ENCODE measurements at regions of chr3 and their contacts with region 1.

Region 1: DNA sequence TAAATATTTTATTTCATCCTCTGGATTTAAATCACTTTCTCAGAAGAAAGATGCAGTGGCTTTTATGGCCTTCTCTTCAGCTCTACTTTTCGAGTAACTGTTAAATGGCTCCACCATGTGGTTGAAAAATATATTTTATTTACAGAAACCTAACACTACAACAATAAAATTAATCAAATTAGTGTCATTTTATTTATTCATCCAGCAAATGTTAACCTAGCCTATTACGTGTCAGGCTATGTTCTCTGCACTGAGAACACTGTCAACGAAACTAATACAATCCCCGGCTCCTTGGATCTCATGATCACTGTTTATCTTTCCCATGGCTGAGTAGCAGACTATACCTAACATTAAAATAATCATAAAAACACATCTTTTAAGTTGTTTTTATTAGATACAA is 148.0 kb upstream of the OSTN start:
- DNase-seq: no peak
- H3K4me3 Mint-ChIP-seq: no peak overlapping the region
- H3K27ac Mint-ChIP-seq: no peak overlapping the region
- H3K4me1 Mint-ChIP-seq: no peaks in the 10 kb centered on the region
- H3K27me3 Mint-ChIP-seq: no peaks in the 10 kb centered on the region

Region 2: DNA sequence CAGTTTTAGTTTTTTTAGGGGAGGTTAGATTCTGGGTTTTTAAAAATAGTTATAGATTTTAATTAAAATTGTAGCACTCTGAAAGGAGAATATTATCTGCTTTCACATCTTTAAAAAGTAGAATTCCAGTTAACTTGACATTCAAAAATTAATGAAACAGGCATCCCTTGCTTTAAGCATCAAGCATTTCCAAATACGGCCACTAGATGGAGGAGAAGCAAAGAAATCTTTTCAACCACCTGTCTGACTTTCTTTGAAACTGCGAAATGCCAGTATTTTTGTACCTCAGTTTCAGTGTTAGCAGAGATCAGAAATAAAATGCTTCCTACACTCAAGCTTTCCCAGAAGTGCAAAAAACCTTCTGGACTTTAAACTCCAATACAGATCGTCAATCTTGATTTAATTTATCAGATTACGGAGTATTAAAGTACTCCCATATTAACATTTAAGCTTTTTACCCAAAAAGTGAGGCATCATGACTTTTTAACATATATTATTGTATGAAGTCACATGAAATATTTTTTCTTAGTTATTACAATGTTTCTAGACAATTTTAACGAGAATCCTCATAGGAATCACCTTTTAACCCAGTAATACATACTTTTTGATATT is 1083.7 kb before region 1 on chr3:
- intact Hi-C with region 1: loop called (anchors 2 kb)
- DNase-seq: no peak
- H3K4me3 Mint-ChIP-seq: no peak overlapping the region
- H3K27ac Mint-ChIP-seq: no peak overlapping the region
- H3K4me1 Mint-ChIP-seq: peaks cover 8% of the 10 kb centered on the region
- H3K27me3 Mint-ChIP-seq: peaks cover 7% of the 10 kb centered on the region

Region 3: DNA sequence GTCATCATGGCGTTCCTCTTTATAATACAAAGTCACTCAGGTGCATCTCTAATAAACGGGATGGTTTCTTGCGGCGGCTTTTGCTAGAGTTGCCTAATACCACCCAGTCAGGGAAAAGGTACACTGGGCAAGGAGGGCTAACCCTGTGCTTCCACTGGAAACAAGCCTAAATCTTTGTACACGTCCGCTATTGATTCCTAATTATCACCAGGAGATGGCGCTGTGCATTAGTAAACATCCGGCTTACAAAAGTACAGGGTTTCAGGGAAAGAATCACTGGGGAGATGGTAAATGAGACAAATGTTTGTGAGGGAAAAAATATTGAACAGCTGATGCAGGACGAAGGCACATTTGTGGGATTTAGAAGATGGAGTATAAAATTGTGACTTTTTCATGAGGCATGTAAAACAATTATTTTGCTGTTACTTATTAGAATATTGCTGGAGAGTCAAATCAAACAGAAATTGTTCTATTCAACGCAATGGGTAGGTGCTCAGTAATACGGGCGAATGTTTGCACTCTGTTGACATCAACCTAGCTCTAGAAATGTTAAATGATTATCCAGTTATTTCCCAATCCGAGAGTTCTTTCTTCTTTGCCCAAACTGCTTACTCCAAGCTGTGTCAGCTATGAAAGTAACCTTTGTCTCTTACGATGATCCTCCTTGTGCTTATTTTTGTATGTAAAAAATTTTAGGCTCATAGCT is 239.1 kb before region 1 on chr3:
- intact Hi-C with region 1: loop called (anchors 2 kb)
- DNase-seq: no peak
- H3K4me3 Mint-ChIP-seq: no peak overlapping the region
- H3K27ac Mint-ChIP-seq: no peak overlapping the region
- H3K4me1 Mint-ChIP-seq: no peaks in the 10 kb centered on the region
- H3K27me3 Mint-ChIP-seq: no peaks in the 10 kb centered on the region

Region 4: GRCh38 chr3:190883973-190884832 is 166.8 kb before region 1 on chr3:
- intact Hi-C with region 1: loop called (anchors 1 kb)
- DNase-seq: no peak
- H3K4me3 Mint-ChIP-seq: no peak overlapping the region
- H3K27ac Mint-ChIP-seq: no peak overlapping the region
- H3K4me1 Mint-ChIP-seq: no peaks in the 10 kb centered on the region
- H3K27me3 Mint-ChIP-seq: no peaks in the 10 kb centered on the region

Region 5: DNA sequence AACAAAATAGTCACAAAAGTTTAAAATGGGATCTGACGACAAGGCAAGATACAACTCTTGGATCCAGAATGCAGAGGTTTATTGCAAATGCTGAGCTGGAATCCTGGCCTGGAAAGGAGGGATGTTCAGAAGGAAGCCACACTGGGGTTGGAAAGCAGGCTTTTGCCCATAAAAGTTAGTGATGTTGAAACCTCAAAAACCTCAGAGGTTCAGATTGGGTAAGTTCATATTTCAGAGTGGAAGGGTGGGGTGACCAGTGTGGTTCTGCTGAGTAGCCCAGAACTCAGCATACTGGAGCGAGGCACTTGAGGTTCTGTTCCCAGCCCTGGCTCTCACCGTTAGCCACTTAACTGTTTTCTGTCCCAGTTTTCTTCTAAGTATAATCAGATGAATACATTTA is 34.1 kb after region 1 on chr3:
- intact Hi-C with region 1: no loop called
- DNase-seq: no peak
- H3K4me3 Mint-ChIP-seq: no peak overlapping the region
- H3K27ac Mint-ChIP-seq: no peak overlapping the region
- H3K4me1 Mint-ChIP-seq: no peaks in the 10 kb centered on the region
- H3K27me3 Mint-ChIP-seq: no peaks in the 10 kb centered on the region